ENCODE measurements at regions of chr12 and their contacts with region 1.

Region 1: GRCh38 chr12:89524541-89525285 is at the start of gene GALNT4:
- DNase-seq: peak; percentile 92 to 93
- ATAC-seq: peak; percentile 83
- total RNA-seq, gene GALNT4: 47.4 to 57.1 TPM

Region 2: DNA sequence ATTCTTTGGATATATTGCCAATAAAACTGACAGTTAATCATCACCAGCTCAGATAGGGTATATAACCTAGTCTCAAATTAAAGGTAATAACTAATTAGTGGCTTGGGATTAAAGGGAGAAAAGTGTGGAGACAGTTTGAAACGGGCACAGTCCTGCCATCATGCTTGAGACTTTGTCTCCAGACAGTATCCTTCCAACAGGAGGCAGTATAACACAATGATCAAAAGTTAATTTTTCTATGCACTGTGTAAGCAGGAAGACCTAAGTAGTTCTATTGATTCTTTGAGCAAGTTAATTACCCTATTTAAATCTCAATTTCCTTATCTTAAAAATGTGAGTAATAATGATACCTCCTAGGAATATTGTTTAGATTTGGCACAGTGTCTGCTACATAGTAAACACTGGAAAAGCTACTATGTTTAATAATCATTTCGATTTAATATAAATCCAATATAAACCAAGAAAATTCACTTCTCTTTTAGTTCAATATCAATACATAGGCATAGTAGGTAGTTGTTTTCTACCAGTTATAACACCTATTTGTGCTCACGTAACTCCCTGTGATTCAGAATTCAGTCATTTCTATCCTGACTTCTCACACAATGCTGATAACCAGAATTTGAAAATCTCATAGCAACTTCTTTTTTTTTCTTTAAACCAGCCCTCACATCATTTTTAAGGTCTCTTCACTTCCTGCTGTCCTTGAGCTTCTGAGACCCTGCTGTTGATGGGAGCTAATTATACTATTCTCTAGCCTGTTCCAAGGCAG is 53.8 kb before region 1 on chr12:
- intact Hi-C with region 1: loop called (anchors 5 to 10 kb)
- DNase-seq: no peak
- ATAC-seq: peak; percentile 92

Region 3: GRCh38 chr12:89657066-89657465 is 132.4 kb after region 1 on chr12:
- intact Hi-C with region 1: no loop called
- DNase-seq: no peak
- ATAC-seq: no peak

Measured in left colon (tissue), 2 donors.